ENCODE measurements at regions of chr17 and their contacts with region 1.

Region 1: GRCh38 chr17:44006598-44007345 is 2.4 kb downstream of the NAGS start:
- DNase-seq: peak; percentile 100
- ATAC-seq: peak; percentile 62
- H3K4me3 Mint-ChIP-seq: peak overlapping the region; percentile 92
- H3K27ac Mint-ChIP-seq: peak overlapping the region; percentile 83
- H3K4me1 Mint-ChIP-seq: peaks cover 17% of the 10 kb centered on the region
- H3K27me3 Mint-ChIP-seq: peaks cover 23% of the 10 kb centered on the region
- CTCF ChIP-seq: peak; percentile 50

Region 2: GRCh38 chr17:43907425-43907981 is 99.3 kb before region 1 on chr17 and contains the start of gene MPP2:
- CTCF ChIA-PET with region 1: interaction called, 17 read pairs
- POLR2A ChIA-PET with region 1: no interaction called
- DNase-seq: peak; percentile 88
- ATAC-seq: peak; percentile 16
- H3K4me3 Mint-ChIP-seq: peak within 1 kb of the TSS; percentile 90
- H3K27ac Mint-ChIP-seq: no peak within 1 kb of the TSS
- H3K4me1 Mint-ChIP-seq: peaks cover 26% of the 10 kb centered on the region
- H3K27me3 Mint-ChIP-seq: peaks cover 49% of the 10 kb centered on the region
- CTCF ChIP-seq: no peak
- total RNA-seq, gene MPP2: 29.3 to 31.4 TPM (median 29.9 TPM) in 3 replicates

Region 3: DNA sequence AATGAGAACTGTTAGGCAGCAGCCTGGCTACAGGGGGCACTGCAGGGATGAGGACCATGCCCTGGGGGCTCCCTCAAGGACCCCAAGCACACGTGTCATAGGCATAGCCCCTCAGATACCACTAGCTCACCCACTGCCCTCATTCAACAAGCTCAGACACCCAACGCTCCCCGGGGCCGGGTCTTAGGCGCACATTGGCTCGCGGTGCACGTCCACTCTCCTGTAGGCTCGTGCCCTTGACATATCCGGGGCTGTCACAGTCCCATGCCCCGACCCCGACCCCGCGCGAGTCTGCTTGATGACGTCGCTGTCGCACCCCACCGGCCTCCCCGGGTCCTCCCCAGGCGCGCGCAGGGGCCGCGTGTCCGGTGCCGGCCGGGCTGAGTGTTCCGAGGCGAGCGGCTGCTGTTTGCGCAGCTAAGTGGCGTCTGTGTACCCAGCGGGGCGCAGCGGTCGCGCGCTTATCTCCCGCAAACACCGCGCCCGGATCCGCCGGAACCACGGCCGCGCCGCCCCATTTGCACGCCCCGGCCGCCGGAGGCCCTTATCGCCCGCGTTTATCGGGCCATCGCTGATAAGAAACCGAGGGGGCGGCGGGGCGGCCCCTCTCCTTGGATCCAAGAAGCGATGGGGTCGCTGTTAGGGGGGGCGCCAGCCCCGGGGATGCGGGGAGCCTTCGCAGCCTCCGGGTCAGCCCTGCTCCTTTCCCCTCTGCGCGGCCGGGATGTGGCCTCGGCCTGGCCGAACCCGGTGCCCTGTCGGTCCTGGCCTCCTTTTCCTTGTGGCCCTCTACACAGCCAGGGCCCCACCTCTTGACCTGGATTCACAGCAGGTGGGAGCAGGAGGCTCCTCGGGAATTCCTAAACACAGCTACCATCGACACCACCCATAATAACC is 23.0 kb before region 1 on chr17:
- CTCF ChIA-PET with region 1: interaction called, 20 read pairs
- POLR2A ChIA-PET with region 1: no interaction called
- DNase-seq: peak; percentile 65
- ATAC-seq: peak; percentile 75
- H3K4me3 Mint-ChIP-seq: peak overlapping the region; percentile 69
- H3K27ac Mint-ChIP-seq: no peak overlapping the region
- H3K4me1 Mint-ChIP-seq: peaks cover 4% of the 10 kb centered on the region; the same call in 1 of the 2 replicates
- H3K27me3 Mint-ChIP-seq: peaks cover 24% of the 10 kb centered on the region
- CTCF ChIP-seq: peak; percentile 41; the same call in 1 of the 2 replicates

Region 4: GRCh38 chr17:44044067-44044466 is 37.3 kb after region 1 on chr17:
- CTCF ChIA-PET with region 1: interaction called, 10 read pairs
- POLR2A ChIA-PET with region 1: no interaction called
- DNase-seq: no peak
- ATAC-seq: no peak
- H3K4me3 Mint-ChIP-seq: no peak overlapping the region
- H3K27ac Mint-ChIP-seq: peak overlapping the region; percentile 70
- H3K4me1 Mint-ChIP-seq: peaks cover 16% of the 10 kb centered on the region
- H3K27me3 Mint-ChIP-seq: no peaks in the 10 kb centered on the region
- CTCF ChIP-seq: no peak

Region 5: DNA sequence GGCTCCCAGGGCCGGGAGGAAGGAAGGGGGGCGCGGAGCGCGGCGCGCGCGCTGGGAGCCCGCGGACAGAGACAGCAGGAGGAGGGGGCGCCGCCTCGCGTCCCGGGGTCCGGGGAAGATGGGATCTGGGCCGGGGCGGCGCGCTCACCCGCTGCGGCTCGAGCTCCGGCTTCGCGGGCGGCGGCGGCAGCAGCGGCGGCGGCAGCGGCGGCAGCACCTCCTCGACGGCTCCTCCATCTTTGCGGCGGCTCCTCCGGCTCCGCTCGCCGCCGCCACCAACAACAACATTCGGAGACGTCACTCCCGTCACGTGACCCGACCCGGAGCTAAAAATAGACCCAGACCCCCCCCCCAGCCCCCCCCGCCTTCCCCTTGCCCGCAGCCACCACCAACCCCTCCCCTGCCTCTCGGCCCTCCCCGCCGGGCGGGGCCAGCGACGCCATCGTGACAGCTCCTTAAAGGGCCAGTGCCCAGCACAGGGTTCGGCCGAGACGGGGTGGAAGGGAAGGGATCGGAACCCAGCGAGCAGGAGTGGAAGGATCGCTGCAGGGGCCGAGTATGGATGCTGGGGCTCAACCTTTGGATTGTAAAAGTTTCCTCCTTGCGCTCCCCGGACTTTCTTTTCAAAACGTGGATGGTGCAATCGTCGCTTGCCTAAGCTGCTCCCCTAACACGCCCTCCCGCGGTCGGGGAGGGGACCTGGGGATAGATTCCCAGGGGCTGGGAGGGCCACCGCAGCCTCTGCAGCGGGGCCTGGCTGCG is 116.8 kb after region 1 on chr17 and contains the start of gene HDAC5:
- CTCF ChIA-PET with region 1: interaction called, 10 read pairs
- POLR2A ChIA-PET with region 1: no interaction called
- DNase-seq: peak; percentile 95
- ATAC-seq: peak; percentile 86
- H3K4me3 Mint-ChIP-seq: peak within 1 kb of the TSS; percentile 91
- H3K27ac Mint-ChIP-seq: peak within 1 kb of the TSS; percentile 97
- H3K4me1 Mint-ChIP-seq: peaks cover 38% of the 10 kb centered on the region
- H3K27me3 Mint-ChIP-seq: no peaks in the 10 kb centered on the region
- CTCF ChIP-seq: no peak; the same call in 1 of the 2 replicates
- total RNA-seq, gene HDAC5: 54.0 to 61.6 TPM (median 59.0 TPM) in 3 replicates